GM12878 (cell line): ENCODE measurements at regions of chr2 and their contacts with region 1.

Region 1: DNA sequence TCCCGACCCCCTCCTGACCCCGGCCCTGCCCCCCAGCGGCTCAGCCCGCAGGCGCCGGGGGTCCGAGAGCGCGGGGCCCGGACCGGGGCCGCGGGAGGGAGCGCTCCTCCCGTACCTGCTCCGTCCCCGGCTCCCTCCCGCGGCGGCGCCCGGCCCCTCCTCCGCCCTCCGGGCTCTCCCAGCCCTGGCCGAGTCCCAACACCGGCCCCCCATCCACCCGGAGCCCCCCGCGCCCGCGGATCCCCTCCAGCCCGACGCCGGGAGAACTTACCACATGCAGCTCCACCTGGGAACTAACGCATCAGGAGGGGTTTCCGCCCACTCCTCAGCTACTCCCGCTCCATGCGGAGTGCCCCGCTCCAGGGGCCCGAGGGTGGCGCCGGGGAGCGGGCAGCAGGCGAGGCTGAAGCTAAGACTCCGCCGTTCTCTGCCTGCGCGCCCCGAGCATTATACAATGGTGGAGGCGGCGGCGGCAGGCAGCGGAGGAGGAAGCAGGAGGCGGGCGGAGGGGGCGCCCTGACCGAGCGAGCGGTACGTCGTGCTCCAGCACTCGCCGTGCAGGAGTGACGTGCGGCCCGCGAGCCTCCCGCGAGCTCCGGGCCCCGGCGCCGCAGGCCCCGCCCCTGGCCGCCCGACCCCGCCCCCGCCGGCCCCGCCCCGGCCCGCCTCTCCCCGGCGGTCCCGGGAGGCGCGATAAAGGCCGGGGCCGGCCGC is at the start of gene SERTAD2:
- DNase-seq: no peak
- ATAC-seq: peak; percentile 70
- H3K4me3 ChIP-seq: peak within 1 kb of the TSS; percentile 95
- H3K27ac ChIP-seq: peak within 1 kb of the TSS; percentile 81
- H3K4me1 ChIP-seq: peaks cover 51% of the 10 kb centered on the region
- H3K27me3 ChIP-seq: no peaks in the 10 kb centered on the region
- CTCF ChIP-seq: 0 out of 6 replicates have a peak, but pooled peaks of 1 of the 3 experiments have one; percentile 6
- EP300 ChIP-seq: no peak
- POLR2A ChIP-seq: peak; percentile 90
- RAD21 ChIP-seq: 0 out of 2 replicates have a peak, but pooled peaks have one; percentile 19
- polyA plus RNA-seq, gene SERTAD2: 7.9 TPM

Region 2: GRCh38 chr2:64548761-64549160 is 104.7 kb before region 1 on chr2:
- CTCF ChIA-PET with region 1: no interaction called
- POLR2A ChIA-PET with region 1: no interaction called
- RAD21 ChIA-PET with region 1: no interaction called
- SMC1A ChIA-PET with region 1: no interaction called
- in situ Hi-C with region 1: no loop called
- intact Hi-C with region 1: no loop called
- DNase-seq: no peak
- ATAC-seq: no peak
- H3K4me3 ChIP-seq: no peak overlapping the region
- H3K27ac ChIP-seq: no peak overlapping the region
- H3K4me1 ChIP-seq: no peaks in the 10 kb centered on the region
- H3K27me3 ChIP-seq: no peaks in the 10 kb centered on the region
- CTCF ChIP-seq: no peak
- EP300 ChIP-seq: no peak
- POLR2A ChIP-seq: no peak
- RAD21 ChIP-seq: no peak

Region 3: DNA sequence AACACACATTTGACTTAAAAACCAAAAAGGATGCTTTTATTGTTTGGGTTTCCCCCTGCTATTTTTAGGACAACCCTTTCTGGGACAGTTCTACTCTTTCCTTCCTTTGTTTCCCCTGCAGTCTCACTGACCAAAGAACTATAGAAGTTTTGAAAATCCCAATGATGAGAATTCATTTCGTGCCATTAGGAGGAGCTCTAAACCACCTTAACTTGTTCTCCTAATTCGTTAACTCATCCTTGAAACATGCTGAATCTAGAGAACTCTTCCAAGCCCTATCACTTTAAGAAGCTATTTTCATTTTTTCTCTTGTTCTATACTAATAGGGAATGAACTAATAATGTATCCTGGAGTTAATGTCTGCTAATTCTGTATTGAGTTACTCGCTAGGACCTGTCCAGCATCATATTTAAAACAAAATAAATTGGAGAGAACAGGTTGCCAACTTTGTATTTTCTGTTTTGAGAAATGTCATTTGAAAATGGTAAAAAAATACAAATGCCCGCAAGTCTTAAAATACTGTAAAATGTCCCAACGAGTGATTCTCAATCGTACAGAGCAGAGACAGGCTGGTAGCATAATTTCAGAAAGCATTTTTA is 66.5 kb before region 1 on chr2:
- CTCF ChIA-PET with region 1: interaction called, 11 read pairs
- POLR2A ChIA-PET with region 1: interaction called, 10 read pairs
- RAD21 ChIA-PET with region 1: interaction called, 14 read pairs
- SMC1A ChIA-PET with region 1: interaction called, 21 read pairs
- in situ Hi-C with region 1: no loop called
- intact Hi-C with region 1: no loop called
- DNase-seq: no peak
- ATAC-seq: peak; percentile 30
- H3K4me3 ChIP-seq: no peak overlapping the region
- H3K27ac ChIP-seq: no peak overlapping the region
- H3K4me1 ChIP-seq: peaks cover 40% of the 10 kb centered on the region
- H3K27me3 ChIP-seq: no peaks in the 10 kb centered on the region
- CTCF ChIP-seq: peak; percentile 54 to 77 (median 63)
- EP300 ChIP-seq: no peak
- POLR2A ChIP-seq: no peak
- RAD21 ChIP-seq: peak; percentile 83

Region 4: DNA sequence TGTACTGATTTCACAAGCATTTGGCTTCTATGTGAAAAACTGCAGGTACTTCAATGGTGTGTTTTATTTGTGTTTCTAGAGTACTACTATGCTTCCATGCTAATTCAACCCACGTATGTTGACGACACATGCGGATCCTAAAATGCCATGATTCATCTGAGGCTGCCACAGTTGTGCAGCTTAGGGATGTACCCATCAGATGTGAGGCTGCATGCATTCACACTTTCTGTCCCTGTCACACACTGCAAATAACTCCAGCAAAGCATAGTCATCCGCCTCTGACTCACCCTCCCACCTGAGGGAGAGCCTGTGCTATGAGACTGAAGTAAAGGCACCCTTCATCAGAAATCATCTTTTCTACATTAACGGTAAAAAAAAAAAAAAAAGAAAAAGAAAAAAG is 22.4 kb after region 1 on chr2:
- CTCF ChIA-PET with region 1: interaction called, 60 read pairs
- POLR2A ChIA-PET with region 1: interaction called, 21 read pairs
- RAD21 ChIA-PET with region 1: interaction called, 11 read pairs
- SMC1A ChIA-PET with region 1: interaction called, 20 read pairs
- in situ Hi-C with region 1: no loop called
- intact Hi-C with region 1: no loop called
- DNase-seq: no peak
- ATAC-seq: peak; percentile 38; the same call in 2 of the 3 replicates
- H3K4me3 ChIP-seq: no peak overlapping the region
- H3K27ac ChIP-seq: no peak overlapping the region
- H3K4me1 ChIP-seq: peaks cover 20% of the 10 kb centered on the region
- H3K27me3 ChIP-seq: no peaks in the 10 kb centered on the region
- CTCF ChIP-seq: no peak
- EP300 ChIP-seq: no peak
- POLR2A ChIP-seq: no peak
- RAD21 ChIP-seq: no peak

Region 5: DNA sequence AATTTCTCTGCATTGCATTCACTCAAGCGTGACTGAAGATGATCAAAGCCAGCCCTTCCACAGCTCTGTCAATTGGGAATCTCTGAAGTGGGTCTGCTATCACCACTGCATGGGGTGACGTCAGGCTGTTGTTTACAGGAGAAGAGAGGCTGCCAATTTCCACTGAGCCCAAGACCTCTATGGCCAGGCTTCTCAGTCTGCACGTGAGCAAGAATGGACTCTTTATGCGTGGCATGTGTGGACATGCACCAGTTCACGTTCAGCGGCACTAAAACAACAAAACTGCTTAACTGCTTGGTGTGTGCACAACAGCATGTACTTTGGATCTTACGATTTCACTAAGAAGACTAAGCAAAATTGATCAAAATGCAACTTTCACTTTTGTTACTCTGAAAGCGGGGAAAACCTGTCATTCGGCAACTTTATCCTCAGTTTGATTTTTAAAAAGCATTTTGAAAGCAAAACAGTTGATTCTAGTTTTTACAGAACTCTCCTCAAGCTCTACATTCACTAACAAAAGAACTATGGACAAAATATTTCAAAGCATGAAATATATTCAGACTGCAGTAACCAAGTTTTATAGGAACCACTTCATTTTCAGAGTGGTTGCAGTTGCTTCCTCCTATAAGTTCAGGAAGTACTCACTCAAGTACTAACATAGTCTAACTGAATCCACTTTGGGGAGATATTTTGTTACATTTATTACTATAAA is 77.2 kb after region 1 on chr2:
- CTCF ChIA-PET with region 1: interaction called, 31 read pairs
- POLR2A ChIA-PET with region 1: interaction called, 113 read pairs
- RAD21 ChIA-PET with region 1: interaction called, 212 read pairs
- SMC1A ChIA-PET with region 1: interaction called, 945 read pairs
- in situ Hi-C with region 1: no loop called
- intact Hi-C with region 1: loop called (anchors 2 kb)
- DNase-seq: peak; percentile 69
- ATAC-seq: peak; percentile 39
- H3K4me3 ChIP-seq: peak overlapping the region; percentile 58
- H3K27ac ChIP-seq: peak overlapping the region; percentile 83
- H3K4me1 ChIP-seq: peaks cover 48% of the 10 kb centered on the region
- H3K27me3 ChIP-seq: no peaks in the 10 kb centered on the region
- CTCF ChIP-seq: no peak
- EP300 ChIP-seq: no peak
- POLR2A ChIP-seq: no peak
- RAD21 ChIP-seq: no peak

Region 6: GRCh38 chr2:64831134-64831976 is 177.8 kb after region 1 on chr2:
- CTCF ChIA-PET with region 1: interaction called, 70 read pairs
- POLR2A ChIA-PET with region 1: interaction called, 7 read pairs
- RAD21 ChIA-PET with region 1: interaction called, 65 read pairs
- SMC1A ChIA-PET with region 1: interaction called, 52 read pairs
- in situ Hi-C with region 1: loop called (anchors 10 kb)
- intact Hi-C with region 1: no loop called
- DNase-seq: peak; percentile 71
- ATAC-seq: peak; percentile 96
- H3K4me3 ChIP-seq: peak overlapping the region; percentile 19; the same call in 1 of the 2 replicates
- H3K27ac ChIP-seq: peak overlapping the region; percentile 80
- H3K4me1 ChIP-seq: peaks cover 12% of the 10 kb centered on the region
- H3K27me3 ChIP-seq: no peaks in the 10 kb centered on the region
- CTCF ChIP-seq: peak; percentile 80 to 99 (median 98)
- EP300 ChIP-seq: 0 out of 4 replicates have a peak, but pooled peaks of 1 of the 2 experiments have one; percentile 10
- POLR2A ChIP-seq: no peak; the same call in none of the 2 replicates
- RAD21 ChIP-seq: peak; percentile 85

Region 7: DNA sequence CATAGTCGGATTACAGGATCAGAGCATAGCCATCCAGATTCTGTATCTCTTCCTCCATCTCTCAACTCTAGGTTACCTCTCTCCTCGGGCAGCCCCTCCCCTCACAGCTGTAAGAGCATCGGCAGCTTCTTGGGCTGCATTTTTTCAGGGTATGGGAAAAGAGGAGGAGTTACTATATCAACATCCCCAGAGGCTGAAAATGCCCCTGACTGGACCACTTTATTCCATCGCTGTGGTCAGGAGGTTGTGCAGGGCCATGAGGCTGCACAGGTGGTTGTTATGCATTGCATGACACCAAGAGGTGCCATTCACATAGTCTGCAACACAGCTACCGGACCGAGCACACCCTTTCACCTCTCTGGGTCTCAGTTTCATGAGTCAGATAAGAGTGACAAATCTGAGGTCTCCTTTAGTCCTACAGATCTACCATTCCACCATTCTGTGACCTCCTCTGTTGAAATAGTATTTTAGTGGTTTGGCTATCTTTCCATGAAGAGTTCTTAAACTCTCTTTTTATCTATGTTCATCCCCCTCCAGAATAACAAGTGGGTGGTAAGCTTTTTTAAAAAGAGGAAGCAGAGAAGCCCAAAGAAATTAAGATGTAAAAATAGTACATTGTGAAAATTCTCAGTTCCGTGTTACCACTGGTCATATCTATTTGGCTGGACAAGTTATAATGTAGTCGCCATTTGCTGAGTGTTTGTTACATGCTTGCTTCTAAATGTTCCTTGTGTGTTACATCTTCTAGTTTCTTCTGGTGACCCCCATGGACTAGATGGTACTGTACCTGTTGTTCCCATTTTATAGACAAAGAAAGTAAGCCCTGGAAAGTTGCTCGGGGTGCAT is 279.1 kb after region 1 on chr2:
- CTCF ChIA-PET with region 1: no interaction called
- POLR2A ChIA-PET with region 1: interaction called, 3 read pairs
- RAD21 ChIA-PET with region 1: interaction called, 14 read pairs
- SMC1A ChIA-PET with region 1: interaction called, 3 read pairs
- in situ Hi-C with region 1: no loop called
- intact Hi-C with region 1: no loop called
- DNase-seq: peak; percentile 98
- ATAC-seq: peak; percentile 81
- H3K4me3 ChIP-seq: peak overlapping the region; percentile 96
- H3K27ac ChIP-seq: peak overlapping the region; percentile 95
- H3K4me1 ChIP-seq: peaks cover 28% of the 10 kb centered on the region
- H3K27me3 ChIP-seq: no peaks in the 10 kb centered on the region
- CTCF ChIP-seq: no peak
- EP300 ChIP-seq: peak; percentile 62 to 83; a peak in 3 of 4 replicates
- POLR2A ChIP-seq: peak; percentile 84
- RAD21 ChIP-seq: 0 out of 2 replicates have a peak, but pooled peaks have one; percentile 1